Kidney (tissue), 22 donors: ENCODE measurements at regions of chr6 and their contacts with region 1.

Region 1: GRCh38 chr6:78324213-78324612 is 543.1 kb upstream of the IRAK1BP1 start:
- DNase-seq: no peak
- H3K4me3 ChIP-seq: no peak overlapping the region
- H3K27ac ChIP-seq: no peak overlapping the region
- H3K4me1 ChIP-seq: no peaks in the 10 kb centered on the region
- H3K27me3 ChIP-seq: no peaks in the 10 kb centered on the region
- CTCF ChIP-seq: no peak

Region 2: DNA sequence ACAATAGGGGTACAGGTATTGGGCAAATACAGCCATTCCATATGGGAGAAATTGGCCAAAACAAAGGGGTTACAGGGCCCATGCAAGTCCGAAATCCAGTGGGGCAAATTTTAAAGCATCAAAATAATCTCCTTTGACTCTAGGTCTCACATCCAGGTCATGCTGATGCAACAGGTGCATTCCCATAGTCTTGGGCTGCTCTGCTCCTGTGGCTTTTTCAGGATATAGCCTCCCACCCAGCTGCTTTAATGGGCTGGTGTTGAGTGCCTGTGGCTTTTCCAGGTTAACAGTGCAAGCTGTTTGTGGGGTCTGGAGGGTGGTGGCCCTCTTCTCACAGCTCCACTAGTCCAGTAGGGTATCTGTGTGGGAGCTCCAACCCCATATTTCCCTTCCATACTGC is 64.3 kb before region 1 on chr6:
- intact Hi-C with region 1: loop called (anchors 5 kb)
- DNase-seq: no peak
- H3K4me3 ChIP-seq: no peak overlapping the region
- H3K27ac ChIP-seq: no peak overlapping the region
- H3K4me1 ChIP-seq: no peaks in the 10 kb centered on the region
- H3K27me3 ChIP-seq: no peaks in the 10 kb centered on the region
- CTCF ChIP-seq: no peak